CD4-positive, alpha-beta T cell (primary cell): ENCODE measurements at regions of chr12 and their contacts with region 1.

Region 1: DNA sequence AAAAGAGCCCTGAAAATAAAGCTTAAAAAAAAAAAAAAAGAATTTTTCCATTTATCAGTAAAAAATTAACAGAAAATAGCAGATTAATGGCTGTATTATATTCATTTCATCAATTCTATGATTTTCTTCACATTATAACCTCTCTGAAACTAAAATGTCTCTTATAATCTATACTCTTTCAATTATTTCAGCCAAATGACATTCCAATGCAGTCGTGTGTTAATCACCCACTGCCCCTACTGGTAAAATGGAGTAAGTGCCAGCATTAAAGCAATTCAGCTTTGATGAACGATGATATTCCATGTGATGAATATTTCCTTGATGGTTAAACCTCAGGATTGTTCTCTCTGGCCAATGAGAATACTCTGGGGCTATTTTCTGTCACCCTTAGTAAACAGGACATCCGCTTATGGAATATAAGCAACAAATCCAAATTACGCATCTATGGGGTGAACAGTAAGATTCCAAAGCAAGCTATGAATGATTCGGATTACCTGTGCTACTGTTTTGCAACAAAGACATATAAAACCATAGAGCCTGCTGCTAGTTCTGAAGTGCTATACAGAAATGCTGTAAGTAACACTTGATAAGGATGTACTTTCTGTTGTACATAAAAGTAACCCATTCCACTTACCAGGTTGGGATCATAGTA is 20.3 kb upstream of the SYCP3 start:
- DNase-seq: peak in 3 of 14 experiments; percentile 52 to 57 (median 57)
- ATAC-seq: peak; percentile 71
- H3K4me3 ChIP-seq: no peak overlapping the region
- H3K4me3 Mint-ChIP-seq: no peak overlapping the region
- H3K27ac ChIP-seq: no peak overlapping the region
- H3K27ac Mint-ChIP-seq: no peak overlapping the region
- H3K4me1 ChIP-seq: no peaks in the 10 kb centered on the region
- H3K4me1 Mint-ChIP-seq: peaks cover 4% of the 10 kb centered on the region
- H3K27me3 ChIP-seq: no peaks in the 10 kb centered on the region
- H3K27me3 Mint-ChIP-seq: no peaks in the 10 kb centered on the region
- CTCF ChIP-seq: peak; percentile 76

Region 2: DNA sequence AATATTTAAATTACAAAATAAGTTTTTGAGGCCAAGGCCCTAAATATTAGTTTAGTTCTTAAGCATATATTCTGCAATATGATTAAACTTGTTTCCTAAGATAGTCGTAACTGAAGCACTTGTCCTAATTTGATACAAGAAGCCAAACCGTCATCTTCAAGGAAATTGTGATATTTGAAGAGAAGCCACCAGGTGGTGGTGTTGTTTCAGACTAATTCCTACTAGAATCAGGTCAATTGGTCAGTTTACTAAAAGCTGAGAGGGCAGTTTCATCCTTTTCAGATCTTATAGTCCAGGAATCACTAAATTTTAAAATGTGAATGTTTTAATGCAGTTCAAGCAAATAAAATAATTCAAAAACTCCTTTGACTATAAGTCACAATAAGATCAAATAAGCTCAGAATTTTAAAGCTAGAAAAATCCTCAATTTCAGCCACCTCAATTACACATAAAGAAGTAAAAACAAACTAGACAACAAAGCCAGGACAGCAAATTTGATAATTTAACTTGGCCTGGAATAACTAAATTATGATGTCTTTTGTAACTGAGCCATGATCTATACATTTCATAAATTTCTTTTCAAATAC is 344.9 kb before region 1 on chr12:
- CTCF ChIA-PET with region 1: interaction called, 3 read pairs
- POLR2A ChIA-PET with region 1: no interaction called
- intact Hi-C with region 1: loop called in 1 of 2 experiments (anchors 5 kb)
- DNase-seq: peak in 4 of 14 experiments; percentile 17 to 52 (median 42)
- ATAC-seq: no peak
- H3K4me3 ChIP-seq: no peak overlapping the region
- H3K4me3 Mint-ChIP-seq: no peak overlapping the region
- H3K27ac ChIP-seq: no peak overlapping the region
- H3K27ac Mint-ChIP-seq: no peak overlapping the region
- H3K4me1 ChIP-seq: no peaks in the 10 kb centered on the region
- H3K4me1 Mint-ChIP-seq: no peaks in the 10 kb centered on the region
- H3K27me3 ChIP-seq: no peaks in the 10 kb centered on the region
- H3K27me3 Mint-ChIP-seq: no peaks in the 10 kb centered on the region
- CTCF ChIP-seq: peak; percentile 69

Region 3: GRCh38 chr12:101570047-101570446 is 189.5 kb before region 1 on chr12:
- CTCF ChIA-PET with region 1: no interaction called
- POLR2A ChIA-PET with region 1: no interaction called
- intact Hi-C with region 1: loop called in 1 of 2 experiments (anchors 5 kb)
- DNase-seq: no peak
- ATAC-seq: no peak
- H3K4me3 ChIP-seq: no peak overlapping the region
- H3K4me3 Mint-ChIP-seq: no peak overlapping the region
- H3K27ac ChIP-seq: no peak overlapping the region
- H3K27ac Mint-ChIP-seq: no peak overlapping the region
- H3K4me1 ChIP-seq: no peaks in the 10 kb centered on the region
- H3K4me1 Mint-ChIP-seq: no peaks in the 10 kb centered on the region
- H3K27me3 ChIP-seq: peaks cover 0 to 4% of the 10 kb centered on the region in 2 experiments
- H3K27me3 Mint-ChIP-seq: peaks cover 13% of the 10 kb centered on the region
- CTCF ChIP-seq: no peak

Region 4: DNA sequence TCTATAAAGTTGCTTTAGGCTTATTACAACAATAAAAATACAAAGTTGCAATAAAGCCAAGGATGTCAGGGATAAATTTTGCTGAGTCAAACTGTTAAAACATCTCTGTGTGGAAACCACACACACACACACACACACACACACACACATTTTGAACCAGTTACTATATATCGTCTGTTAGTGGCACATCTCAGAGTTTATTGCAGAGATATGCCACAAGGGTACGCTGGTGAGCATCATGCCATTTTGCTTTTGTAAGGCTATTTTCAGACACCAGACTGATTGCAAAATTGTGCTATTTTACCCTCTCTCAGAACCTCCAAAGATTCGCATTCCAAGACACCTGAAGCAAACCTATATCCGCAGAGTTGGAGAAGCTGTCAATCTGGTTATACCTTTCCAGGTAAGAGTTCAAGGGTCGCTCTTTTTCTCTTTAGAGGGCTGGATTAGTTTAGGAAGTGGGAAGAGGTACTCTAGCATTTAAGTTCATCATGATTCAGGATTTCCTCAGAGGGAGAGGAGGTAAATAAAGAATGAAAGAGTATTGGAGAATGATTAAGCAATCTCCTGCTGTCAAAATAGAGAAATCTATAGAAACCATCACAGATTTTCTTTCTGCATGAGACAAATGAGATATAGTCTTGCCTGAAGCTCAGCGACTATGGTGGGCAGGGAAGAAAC is 89.4 kb before region 1 on chr12:
- CTCF ChIA-PET with region 1: interaction called, 3 read pairs
- POLR2A ChIA-PET with region 1: no interaction called
- intact Hi-C with region 1: loop called (anchors 1 to 5 kb)
- DNase-seq: peak in 9 of 14 experiments; percentile 3 to 79 (median 41)
- ATAC-seq: peak; percentile 76
- H3K4me3 ChIP-seq: no peak overlapping the region
- H3K4me3 Mint-ChIP-seq: peak overlapping the region; percentile 49
- H3K27ac ChIP-seq: no peak overlapping the region
- H3K27ac Mint-ChIP-seq: peak overlapping the region; percentile 52
- H3K4me1 ChIP-seq: peaks cover 18% of the 10 kb centered on the region
- H3K4me1 Mint-ChIP-seq: peaks cover 26% of the 10 kb centered on the region
- H3K27me3 ChIP-seq: no peaks in the 10 kb centered on the region
- H3K27me3 Mint-ChIP-seq: peaks cover 4% of the 10 kb centered on the region
- CTCF ChIP-seq: peak; percentile 32

Region 5: DNA sequence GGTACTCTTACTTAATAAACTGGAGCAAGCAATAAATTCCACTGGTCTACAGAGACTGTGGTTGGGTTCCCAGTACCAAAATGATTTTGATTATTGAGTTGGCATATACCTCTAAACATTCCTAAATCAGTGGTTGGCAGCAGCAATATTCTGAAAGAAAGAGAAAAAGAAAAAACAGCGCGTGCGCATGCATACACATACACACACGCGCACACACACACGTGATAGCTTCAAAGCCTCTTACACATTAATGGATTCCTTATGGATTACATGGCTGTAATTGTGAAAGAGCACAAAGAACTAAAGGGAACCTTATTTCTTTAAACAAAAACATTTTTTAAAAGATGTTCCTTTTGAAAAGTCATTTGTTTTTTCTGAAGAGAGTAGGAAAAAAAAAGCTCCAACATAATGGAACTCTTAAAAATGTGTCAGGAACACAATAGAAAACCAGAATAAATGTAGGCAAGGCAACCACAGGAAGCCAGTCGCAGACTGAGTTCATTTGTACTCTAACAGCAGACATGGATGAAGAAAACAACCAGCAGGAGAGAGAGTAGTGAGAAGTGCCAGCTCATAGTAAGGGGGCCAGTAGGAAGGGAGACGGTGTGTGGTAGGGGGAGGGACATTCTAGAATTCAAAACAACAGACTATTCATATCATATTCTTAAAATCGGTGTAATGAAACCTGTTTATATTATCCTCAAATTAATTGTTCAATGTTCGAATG is 197.9 kb after region 1 on chr12:
- CTCF ChIA-PET with region 1: no interaction called
- POLR2A ChIA-PET with region 1: no interaction called
- intact Hi-C with region 1: no loop called
- DNase-seq: no peak
- ATAC-seq: no peak
- H3K4me3 ChIP-seq: no peak overlapping the region
- H3K4me3 Mint-ChIP-seq: no peak overlapping the region
- H3K27ac ChIP-seq: no peak overlapping the region
- H3K27ac Mint-ChIP-seq: no peak overlapping the region
- H3K4me1 ChIP-seq: no peaks in the 10 kb centered on the region
- H3K4me1 Mint-ChIP-seq: no peaks in the 10 kb centered on the region
- H3K27me3 ChIP-seq: no peaks in the 10 kb centered on the region
- H3K27me3 Mint-ChIP-seq: peaks cover 7% of the 10 kb centered on the region
- CTCF ChIP-seq: no peak